ENCODE measurements at regions of chr6 and their contacts with region 1.

Region 1: GRCh38 chr6:70369332-70369950 is 43.9 kb upstream of the FAM135A start:
- DNase-seq: peak; percentile 55 to 57
- ATAC-seq: peak in 7 of 8 donors; percentile 65 to 79 (median 75)
- H3K4me3 ChIP-seq: no peak overlapping the region
- H3K27ac ChIP-seq: no peak overlapping the region
- H3K4me1 ChIP-seq: peaks cover 0 to 3% (median 0%) of the 10 kb centered on the region in 9 donors
- H3K27me3 ChIP-seq: peaks cover 0 to 24% (median 0%) of the 10 kb centered on the region in 7 donors
- CTCF ChIP-seq: peak; percentile 75 to 96 (median 91)

Region 2: DNA sequence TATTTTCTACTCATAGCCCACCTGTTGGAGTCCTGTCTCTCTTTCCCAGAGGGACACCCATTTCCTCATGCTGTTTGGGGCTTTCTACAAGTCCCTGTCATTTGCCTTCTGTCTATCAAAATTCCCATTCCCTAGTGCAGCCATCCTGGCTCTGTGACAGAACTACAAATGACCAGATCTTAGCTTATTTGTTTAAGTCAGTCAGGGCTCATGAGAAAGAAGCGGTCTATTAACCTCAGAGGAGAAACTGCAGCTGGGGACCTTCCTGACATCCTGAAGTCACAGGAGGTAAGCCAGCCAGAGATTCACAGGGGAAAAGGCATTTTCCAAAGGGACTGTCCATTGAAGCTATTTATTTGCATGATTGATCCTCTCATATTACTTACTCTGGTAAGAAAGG is 64.8 kb before region 1 on chr6:
- intact Hi-C with region 1: loop called in 1 of 10 experiments (anchors 5 kb)
- DNase-seq: peak in 1 of 2 donors; percentile 27
- ATAC-seq: peak in 1 of 8 donors; percentile 49
- H3K4me3 ChIP-seq: no peak overlapping the region
- H3K27ac ChIP-seq: no peak overlapping the region
- H3K4me1 ChIP-seq: no peaks in the 10 kb centered on the region
- H3K27me3 ChIP-seq: peaks cover 0 to 25% (median 0%) of the 10 kb centered on the region in 7 donors
- CTCF ChIP-seq: no peak

Region 3: GRCh38 chr6:70310063-70310694 is 59.3 kb before region 1 on chr6:
- intact Hi-C with region 1: loop called in 8 of 10 experiments (anchors 2 to 5 kb)
- DNase-seq: no peak
- ATAC-seq: no peak
- H3K4me3 ChIP-seq: no peak overlapping the region
- H3K27ac ChIP-seq: no peak overlapping the region
- H3K4me1 ChIP-seq: peaks cover 0 to 6% (median 0%) of the 10 kb centered on the region in 9 donors
- H3K27me3 ChIP-seq: peaks cover 0 to 11% (median 0%) of the 10 kb centered on the region in 7 donors
- CTCF ChIP-seq: peak; percentile 31 to 77 (median 63)

Region 4: DNA sequence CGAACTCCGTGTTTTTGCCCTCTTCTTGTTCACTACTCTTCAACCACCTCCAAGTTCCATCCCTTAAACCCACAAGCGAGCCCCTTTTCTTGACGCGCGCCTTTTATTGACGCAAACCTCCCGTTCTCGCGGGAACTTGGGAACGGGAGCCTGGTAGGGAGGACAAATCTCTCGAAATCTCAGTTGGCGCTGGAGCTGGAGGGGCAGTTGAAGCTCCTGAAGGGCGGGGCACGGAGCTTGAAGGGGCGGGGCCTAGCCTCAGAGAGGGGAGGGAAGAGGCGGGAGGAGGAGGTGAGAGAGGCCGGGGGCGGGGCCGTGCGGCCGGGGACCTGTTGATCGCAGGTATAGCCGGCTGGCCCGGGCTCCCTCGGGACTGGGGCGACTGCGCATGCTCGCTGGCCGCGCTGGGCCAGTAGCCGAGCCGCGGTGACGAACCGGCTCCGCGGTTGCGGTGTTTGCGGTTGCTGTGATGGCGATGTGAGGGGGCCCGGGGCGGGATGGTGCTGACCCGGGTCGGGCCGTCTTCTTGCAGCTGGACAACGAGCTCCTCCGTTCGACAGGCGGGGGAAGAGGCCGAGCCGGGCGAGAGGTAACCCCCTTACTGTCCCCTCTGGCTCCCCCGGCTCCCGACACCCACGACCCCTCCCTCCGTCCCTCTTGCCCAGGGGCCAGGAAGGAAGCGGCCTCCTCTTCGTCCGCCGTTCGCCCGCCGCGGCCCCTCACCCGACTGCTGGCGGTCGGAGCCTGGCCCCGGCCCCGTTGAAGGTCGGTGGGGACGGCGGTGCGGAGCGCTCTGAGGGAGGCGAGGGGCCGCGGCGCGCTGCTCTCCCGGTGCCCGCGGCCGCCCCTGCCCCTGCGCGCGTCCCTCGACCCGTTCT is 43.9 kb after region 1 on chr6 and contains the start of gene FAM135A:
- intact Hi-C with region 1: loop called in 2 of 10 experiments (anchors 1 to 5 kb)
- DNase-seq: peak; percentile 97 to 98
- ATAC-seq: peak; percentile 98 to 100 (median 99)
- H3K4me3 ChIP-seq: peak within 1 kb of the TSS; percentile 65 to 100 (median 98)
- H3K27ac ChIP-seq: peak within 1 kb of the TSS; percentile 65 to 94 (median 86)
- H3K4me1 ChIP-seq: peaks cover 0 to 28% (median 18%) of the 10 kb centered on the region in 9 donors
- H3K27me3 ChIP-seq: no peaks in the 10 kb centered on the region
- CTCF ChIP-seq: no peak
- total RNA-seq, gene FAM135A: 10.5 to 18.0 (median 12.8) TPM

Region 5: GRCh38 chr6:70527071-70527737 is 157.8 kb after region 1 on chr6:
- intact Hi-C with region 1: no loop called
- DNase-seq: no peak
- ATAC-seq: no peak
- H3K4me3 ChIP-seq: no peak overlapping the region
- H3K27ac ChIP-seq: no peak overlapping the region
- H3K4me1 ChIP-seq: no peaks in the 10 kb centered on the region
- H3K27me3 ChIP-seq: no peaks in the 10 kb centered on the region
- CTCF ChIP-seq: no peak

Region 6: GRCh38 chr6:71012866-71013469 is 643.5 kb after region 1 on chr6:
- intact Hi-C with region 1: loop called in 2 of 10 experiments (anchors 5 kb)
- DNase-seq: peak in 1 of 2 donors; percentile 36
- ATAC-seq: peak in 6 of 8 donors; percentile 55 to 87 (median 76)
- H3K4me3 ChIP-seq: no peak overlapping the region
- H3K27ac ChIP-seq: no peak overlapping the region
- H3K4me1 ChIP-seq: no peaks in the 10 kb centered on the region
- H3K27me3 ChIP-seq: no peaks in the 10 kb centered on the region
- CTCF ChIP-seq: peak; percentile 49 to 82 (median 78)

Measured in heart right ventricle (tissue), 16 donors.